Activated CD4-positive, alpha-beta memory T cell treated with anti-CD3 and anti-CD28 coated beads, Interleukin-2, amount 10 ng/mL, durations not matched to agents 7 days and 5 days (primary cell): ENCODE measurements at regions of chr19 and their contacts with region 1.

Region 1: DNA sequence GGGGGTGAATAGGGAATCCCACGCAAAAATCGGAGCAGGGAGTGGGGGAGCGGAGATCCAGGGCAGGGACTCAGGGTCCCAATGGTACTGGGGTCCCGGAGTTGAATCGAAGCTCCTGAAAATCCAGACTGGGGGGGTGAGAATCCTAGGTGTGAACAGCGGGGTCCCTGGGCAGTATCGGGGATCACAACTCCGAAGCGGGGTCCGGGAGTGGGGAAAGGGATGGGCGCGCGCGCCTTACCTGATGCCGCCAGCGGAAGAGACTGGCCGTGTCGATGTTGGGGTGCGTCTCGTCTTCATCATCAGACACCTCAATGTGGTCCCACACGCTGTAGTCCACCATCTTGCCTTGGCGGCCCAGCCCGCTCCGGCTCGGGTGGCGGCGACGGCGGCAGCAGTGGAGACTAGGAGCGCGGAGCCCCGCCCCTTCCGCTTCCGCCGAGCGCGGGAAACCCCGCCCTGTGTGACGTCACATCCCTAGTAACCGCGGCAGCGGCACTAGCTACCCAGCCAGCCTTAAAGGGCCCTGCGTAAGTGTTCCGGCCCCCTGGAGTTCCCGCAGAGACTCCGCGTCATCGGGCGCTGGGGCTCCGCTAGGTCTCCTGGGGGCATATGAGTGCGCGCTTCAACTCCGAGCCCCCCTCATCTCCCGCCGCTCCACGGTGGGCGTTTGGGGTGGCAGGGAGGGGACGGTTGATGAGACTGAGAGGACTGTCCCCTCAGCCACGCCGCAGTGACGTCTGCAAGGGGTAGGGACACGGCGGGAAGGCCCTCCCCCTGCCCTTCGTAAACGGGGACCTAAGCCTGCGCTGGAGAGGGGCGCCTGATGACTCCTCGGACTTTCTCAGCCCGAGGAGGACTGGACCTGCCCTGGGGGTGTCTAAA is at the start of gene CDC37:
- DNase-seq: peak; percentile 98
- H3K4me3 Mint-ChIP-seq: peak within 1 kb of the TSS; percentile 83
- H3K27ac Mint-ChIP-seq: peak within 1 kb of the TSS; percentile 95
- H3K4me1 Mint-ChIP-seq: peaks cover 61% of the 10 kb centered on the region
- H3K27me3 Mint-ChIP-seq: no peaks in the 10 kb centered on the region
- total RNA-seq, gene CDC37: 239 to 244 TPM

Region 2: GRCh38 chr19:10206226-10206885 is 197.0 kb before region 1 on chr19:
- CTCF ChIA-PET with region 1: no interaction called
- POLR2A ChIA-PET with region 1: no interaction called
- DNase-seq: no peak
- H3K4me3 Mint-ChIP-seq: no peak overlapping the region
- H3K27ac Mint-ChIP-seq: no peak overlapping the region
- H3K4me1 Mint-ChIP-seq: no peaks in the 10 kb centered on the region
- H3K27me3 Mint-ChIP-seq: no peaks in the 10 kb centered on the region

Region 3: GRCh38 chr19:10388957-10389356 is 14.4 kb before region 1 on chr19:
- CTCF ChIA-PET with region 1: interaction called, 27 read pairs
- POLR2A ChIA-PET with region 1: interaction called, 3 read pairs
- DNase-seq: peak; percentile 81
- H3K4me3 Mint-ChIP-seq: no peak overlapping the region
- H3K27ac Mint-ChIP-seq: peak overlapping the region; percentile 11
- H3K4me1 Mint-ChIP-seq: peaks cover 7% of the 10 kb centered on the region
- H3K27me3 Mint-ChIP-seq: no peaks in the 10 kb centered on the region

Region 4: GRCh38 chr19:10416380-10417257 is 13.2 kb after region 1 on chr19:
- CTCF ChIA-PET with region 1: interaction called, 707 read pairs
- POLR2A ChIA-PET with region 1: interaction called, 780 read pairs
- DNase-seq: peak; percentile 98
- H3K4me3 Mint-ChIP-seq: peak overlapping the region; percentile 73
- H3K27ac Mint-ChIP-seq: peak overlapping the region; percentile 88
- H3K4me1 Mint-ChIP-seq: peaks cover 74% of the 10 kb centered on the region
- H3K27me3 Mint-ChIP-seq: peaks cover 19% of the 10 kb centered on the region